Gastrocnemius medialis (tissue), 4 donors: ENCODE measurements at regions of chr2 and their contacts with region 1.

Region 1: DNA sequence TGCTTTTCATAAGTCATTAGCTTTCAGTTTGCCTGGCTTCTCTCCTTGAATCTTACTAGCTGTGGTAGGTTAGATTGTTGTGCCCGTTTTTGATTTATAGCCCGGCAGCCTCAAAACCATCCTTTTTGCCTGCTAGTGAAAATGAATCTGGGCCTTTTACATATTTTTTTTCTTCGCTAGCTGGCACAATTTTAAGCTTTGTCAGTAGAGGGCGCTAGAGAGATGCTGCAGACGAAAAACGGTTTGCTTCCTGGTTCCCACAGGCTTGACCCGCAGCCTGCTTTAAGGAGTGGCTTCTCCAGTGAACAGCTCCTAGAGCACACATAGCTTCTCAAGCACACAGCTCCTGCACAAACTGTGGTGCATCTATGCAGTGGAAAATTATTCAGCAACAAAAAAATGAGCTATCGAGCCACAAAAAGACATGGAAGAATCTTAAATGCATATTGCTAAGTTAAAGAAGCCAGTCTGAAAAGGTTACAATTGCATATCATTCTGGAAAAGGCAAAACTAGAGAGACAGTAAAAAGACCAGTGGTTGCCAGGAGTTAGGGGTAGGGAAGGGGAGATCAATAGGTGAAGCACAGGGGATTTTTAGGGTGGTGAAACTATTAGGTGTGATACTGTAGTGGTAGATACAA is 47.9 kb downstream of the E2F6 start:
- DNase-seq: peak in 1 of 2 donors; percentile 39
- ATAC-seq: no peak
- H3K4me3 ChIP-seq: no peak overlapping the region
- H3K27ac ChIP-seq: no peak overlapping the region
- H3K4me1 ChIP-seq: peaks cover 32 to 42% of the 10 kb centered on the region in 2 donors
- H3K27me3 ChIP-seq: no peaks in the 10 kb centered on the region
- CTCF ChIP-seq: peak in 4 of 5 experiments; percentile 37 to 61 (median 56)
- POLR2A ChIP-seq: no peak

Region 2: DNA sequence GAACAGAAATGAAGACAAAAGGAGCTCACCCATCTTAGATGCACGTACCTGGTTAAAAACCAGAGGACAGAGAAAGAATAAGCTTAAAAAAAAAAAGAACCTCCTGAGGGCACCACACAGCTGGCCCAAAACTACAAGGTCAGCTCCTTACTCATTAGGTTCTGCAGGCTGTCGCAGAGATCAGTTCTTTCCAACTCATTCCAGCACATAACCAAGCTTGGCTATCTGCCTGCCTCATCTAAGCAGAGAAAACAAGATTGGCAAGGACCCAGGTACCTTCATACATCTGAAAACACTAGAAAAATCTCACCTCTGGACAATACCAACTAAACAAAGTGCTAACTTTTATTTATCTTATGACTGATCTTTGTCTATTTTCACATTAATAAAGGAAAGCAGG is 818.1 kb before region 1 on chr2:
- in situ Hi-C with region 1: no loop called
- intact Hi-C with region 1: no loop called
- DNase-seq: no peak
- ATAC-seq: no peak
- H3K4me3 ChIP-seq: no peak overlapping the region
- H3K27ac ChIP-seq: no peak overlapping the region
- H3K4me1 ChIP-seq: no peaks in the 10 kb centered on the region
- H3K27me3 ChIP-seq: no peaks in the 10 kb centered on the region
- CTCF ChIP-seq: no peak
- POLR2A ChIP-seq: no peak

Region 3: DNA sequence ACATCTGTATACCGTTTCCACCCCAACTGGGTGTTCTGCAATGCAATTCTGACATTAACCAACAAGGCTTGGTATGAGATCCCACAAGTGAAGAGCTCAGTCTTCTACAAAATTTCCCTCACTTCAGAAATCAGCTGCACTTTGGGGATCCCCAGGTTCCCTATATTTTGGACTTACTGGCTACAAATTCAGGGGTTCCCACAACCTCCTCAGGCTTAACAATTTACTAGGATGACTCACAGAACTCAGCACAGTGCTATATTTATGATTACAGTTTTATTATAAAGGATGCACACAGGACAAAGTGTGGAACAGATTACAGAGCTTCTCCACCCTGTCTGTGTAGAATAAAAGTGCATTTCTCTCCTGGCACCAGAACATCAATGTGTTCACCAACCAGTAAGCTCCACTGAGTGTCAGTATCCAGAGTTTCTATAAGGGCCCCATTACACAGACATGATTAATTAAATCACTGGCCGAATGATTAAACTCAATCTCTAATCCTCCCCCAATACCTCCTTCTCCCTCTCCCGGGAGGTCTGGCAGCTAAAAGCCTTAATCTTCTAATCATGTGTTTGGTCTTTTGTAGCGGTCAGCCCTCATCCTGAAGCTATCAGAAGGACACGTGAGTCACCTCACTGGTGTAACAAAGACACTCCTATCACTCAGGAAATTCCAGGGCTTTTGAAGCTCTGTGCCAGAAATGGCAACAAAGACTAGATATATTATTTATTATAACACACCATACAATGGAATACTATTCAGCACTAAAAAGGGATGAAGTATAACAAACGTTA is 178.2 kb before region 1 on chr2:
- in situ Hi-C with region 1: loop called in 2 of 4 experiments (anchors 5 kb)
- intact Hi-C with region 1: no loop called
- DNase-seq: no peak
- ATAC-seq: no peak
- H3K4me3 ChIP-seq: no peak overlapping the region
- H3K27ac ChIP-seq: peak overlapping the region; percentile 19 to 32 (median 26)
- H3K4me1 ChIP-seq: peaks cover 15 to 19% of the 10 kb centered on the region in 2 donors
- H3K27me3 ChIP-seq: no peaks in the 10 kb centered on the region
- CTCF ChIP-seq: no peak
- POLR2A ChIP-seq: no peak

Region 4: GRCh38 chr2:11329781-11330180 is 88.3 kb before region 1 on chr2:
- in situ Hi-C with region 1: no loop called
- intact Hi-C with region 1: no loop called
- DNase-seq: no peak
- ATAC-seq: peak in 1 of 2 donors; percentile 31
- H3K4me3 ChIP-seq: peak overlapping the region in 1 of 4 donors; percentile 5
- H3K27ac ChIP-seq: peak overlapping the region; percentile 64 to 69 (median 65)
- H3K4me1 ChIP-seq: peaks cover 53 to 80% of the 10 kb centered on the region in 2 donors
- H3K27me3 ChIP-seq: no peaks in the 10 kb centered on the region
- CTCF ChIP-seq: no peak
- POLR2A ChIP-seq: no peak